IMR-90 (cell line): ENCODE measurements at regions of chr9 and their contacts with region 1.

Region 1: DNA sequence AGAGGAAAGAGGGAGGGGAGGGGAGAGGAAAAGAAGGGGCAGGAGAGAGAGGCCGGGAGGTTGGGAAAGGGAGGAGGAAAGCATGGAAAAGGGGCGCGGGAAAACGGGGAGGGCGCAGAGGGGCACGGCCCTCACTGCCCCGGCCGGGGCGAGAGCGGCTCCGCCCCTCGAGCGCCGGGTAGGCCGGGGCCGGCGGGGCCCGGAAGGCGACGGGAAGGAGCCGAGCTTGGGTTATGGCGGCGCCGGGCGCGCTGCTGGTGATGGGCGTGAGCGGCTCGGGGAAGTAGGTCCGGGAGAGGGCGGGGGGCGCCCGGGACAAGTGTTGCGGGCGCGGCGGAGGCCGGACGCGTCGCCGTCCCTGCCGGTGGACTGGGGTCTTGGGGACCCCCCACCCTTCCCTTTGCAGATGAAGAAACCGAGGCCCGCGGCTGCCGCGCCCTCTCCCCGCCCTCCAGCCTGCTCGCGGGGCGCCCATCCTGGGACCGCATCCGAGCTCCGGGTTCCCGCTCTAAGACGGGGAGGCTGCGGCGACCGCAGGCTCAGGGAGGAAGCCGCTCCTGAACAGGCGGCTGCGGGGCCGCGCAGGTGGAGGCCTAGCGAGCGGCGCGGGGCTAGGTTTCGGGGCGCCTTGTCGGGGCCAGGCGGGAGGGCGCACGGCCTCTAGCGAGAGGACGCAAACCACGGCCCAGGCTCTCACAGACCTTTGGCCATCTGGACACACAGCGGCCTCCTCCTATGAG is at the start of gene IDNK:
- DNase-seq: peak; percentile 24
- ATAC-seq: peak; percentile 93
- H3K4me3 ChIP-seq: peak within 1 kb of the TSS; percentile 83
- H3K27ac ChIP-seq: peak within 1 kb of the TSS; percentile 75
- H3K4me1 ChIP-seq: peaks cover 3% of the 10 kb centered on the region; the same call in 1 of the 2 replicates
- H3K27me3 ChIP-seq: no peaks in the 10 kb centered on the region
- CTCF ChIP-seq: no peak
- POLR2A ChIP-seq: peak; percentile 28; the same call in 1 of the 2 replicates
- RAD21 ChIP-seq: no peak
- total RNA-seq, gene IDNK: 1.4 and 1.7 TPM in 2 replicates

Region 2: GRCh38 chr9:83070261-83070660 is 552.8 kb before region 1 on chr9:
- CTCF ChIA-PET with region 1: no interaction called
- POLR2A ChIA-PET with region 1: no interaction called
- dilution Hi-C with region 1: no loop called
- in situ Hi-C with region 1: no loop called
- intact Hi-C with region 1: no loop called
- DNase-seq: peak; percentile 70
- ATAC-seq: no peak
- H3K4me3 ChIP-seq: no peak overlapping the region
- H3K27ac ChIP-seq: no peak overlapping the region
- H3K4me1 ChIP-seq: no peaks in the 10 kb centered on the region
- H3K27me3 ChIP-seq: peaks cover under 1% of the 10 kb centered on the region; the same call in 1 of the 2 replicates
- CTCF ChIP-seq: no peak
- POLR2A ChIP-seq: no peak
- RAD21 ChIP-seq: no peak

Region 3: GRCh38 chr9:83649080-83649479 is 26.0 kb after region 1 on chr9:
- CTCF ChIA-PET with region 1: interaction called, 3 read pairs
- POLR2A ChIA-PET with region 1: no interaction called
- dilution Hi-C with region 1: no loop called
- in situ Hi-C with region 1: no loop called
- intact Hi-C with region 1: loop called (anchors 1 kb)
- DNase-seq: peak; percentile 28
- ATAC-seq: peak; percentile 88
- H3K4me3 ChIP-seq: no peak overlapping the region
- H3K27ac ChIP-seq: no peak overlapping the region
- H3K4me1 ChIP-seq: no peaks in the 10 kb centered on the region
- H3K27me3 ChIP-seq: no peaks in the 10 kb centered on the region
- CTCF ChIP-seq: peak; percentile 71
- POLR2A ChIP-seq: no peak
- RAD21 ChIP-seq: peak; percentile 64

Region 4: DNA sequence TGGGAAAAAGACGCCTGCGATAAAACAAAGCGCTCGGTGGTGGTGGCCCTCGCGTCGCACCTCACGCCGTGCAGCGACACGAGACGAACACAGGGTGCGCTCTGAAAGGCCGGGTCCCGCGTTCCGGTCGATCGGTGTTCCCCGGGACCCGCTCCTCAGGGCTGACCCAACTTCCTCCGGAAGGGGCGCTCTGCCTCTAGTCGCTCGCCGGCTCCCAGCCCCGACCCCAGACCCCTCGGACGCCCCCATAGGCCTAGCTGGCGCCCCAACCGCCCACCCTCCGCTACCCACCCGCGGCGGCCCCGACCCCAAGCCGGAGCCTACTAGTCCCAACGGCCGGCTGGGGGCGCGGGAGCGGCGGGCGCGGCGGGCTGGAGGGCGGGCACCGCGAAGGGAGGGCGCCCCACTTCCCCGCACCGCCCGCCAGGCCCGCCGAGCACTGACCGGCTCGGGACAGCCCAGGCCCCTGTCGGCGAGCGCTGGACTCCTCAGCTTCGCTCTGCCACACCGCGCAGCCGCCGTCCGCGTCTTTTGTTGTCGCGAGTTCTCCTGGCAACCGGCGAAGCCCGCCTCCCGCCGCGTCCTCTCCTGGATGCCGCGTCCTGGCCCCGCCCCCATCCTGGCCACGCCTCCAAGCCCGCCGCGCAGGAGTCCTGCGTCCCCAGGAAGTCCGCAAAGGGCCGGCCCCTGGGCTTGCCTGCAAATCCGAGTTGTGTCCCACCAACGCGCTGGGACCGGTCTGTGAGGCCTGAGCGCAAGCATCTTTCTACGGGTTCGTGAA is 298.0 kb after region 1 on chr9 and contains the start of gene KIF27:
- CTCF ChIA-PET with region 1: interaction called, 3 read pairs
- POLR2A ChIA-PET with region 1: no interaction called
- dilution Hi-C with region 1: no loop called
- in situ Hi-C with region 1: loop called (anchors 10 kb)
- intact Hi-C with region 1: no loop called
- DNase-seq: peak; percentile 96
- ATAC-seq: peak; percentile 97
- H3K4me3 ChIP-seq: peak within 1 kb of the TSS; percentile 55
- H3K27ac ChIP-seq: peak within 1 kb of the TSS; percentile 71
- H3K4me1 ChIP-seq: peaks cover 1% of the 10 kb centered on the region; the same call in 1 of the 2 replicates
- H3K27me3 ChIP-seq: no peaks in the 10 kb centered on the region
- CTCF ChIP-seq: peak; percentile 42
- POLR2A ChIP-seq: peak; percentile 83
- RAD21 ChIP-seq: no peak
- total RNA-seq, gene KIF27: 1.6 and 2.2 TPM in 2 replicates